Activated CD8-positive, alpha-beta T cell treated with anti-CD3 and anti-CD28 coated beads for 36 hours (primary cell): ENCODE measurements at regions of chr16 and their contacts with region 1.

Region 1: DNA sequence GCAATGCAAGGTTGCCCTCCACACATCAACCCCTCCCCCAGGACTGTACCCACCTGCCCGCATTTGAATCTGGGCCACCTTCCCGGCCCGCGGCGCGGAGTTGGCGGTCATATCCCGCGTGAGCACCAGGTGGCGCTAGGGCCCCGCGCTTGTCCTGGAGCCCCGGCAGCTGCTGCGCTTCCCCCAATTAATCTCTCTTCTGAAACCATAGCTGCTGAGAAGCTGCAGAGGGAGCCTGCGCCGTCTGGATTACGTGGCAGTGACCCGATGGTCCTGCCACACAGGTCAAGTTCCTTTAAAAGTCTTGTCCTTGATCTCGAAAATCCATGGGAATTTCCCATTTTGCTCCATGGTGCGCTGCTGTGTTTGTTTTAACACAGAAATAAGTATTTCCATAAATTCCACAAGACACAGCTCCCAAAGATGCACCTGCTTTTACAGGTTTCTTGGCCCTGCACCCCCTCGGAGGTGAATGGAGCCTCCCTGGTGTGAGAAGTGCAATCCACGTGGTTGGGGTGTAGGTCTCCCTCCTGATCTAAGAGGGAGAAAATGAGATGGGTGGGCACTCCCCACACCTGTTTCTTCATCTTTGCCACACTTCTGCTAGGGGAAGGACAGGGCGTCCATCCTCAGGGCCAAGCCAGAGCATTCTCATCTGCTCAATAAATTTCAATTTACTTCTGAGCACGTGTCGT is 22.1 kb downstream of the COX4I1 start:
- DNase-seq: peak; percentile 87
- ATAC-seq: peak; percentile 95
- H3K4me3 Mint-ChIP-seq: no peak overlapping the region
- H3K27ac Mint-ChIP-seq: no peak overlapping the region
- H3K4me1 Mint-ChIP-seq: peaks cover 5% of the 10 kb centered on the region
- H3K27me3 Mint-ChIP-seq: peaks cover 2% of the 10 kb centered on the region
- CTCF ChIP-seq: peak; percentile 96

Region 2: GRCh38 chr16:85717393-85718121 is 104.0 kb before region 1 on chr16:
- CTCF ChIA-PET with region 1: no interaction called
- POLR2A ChIA-PET with region 1: no interaction called
- intact Hi-C with region 1: no loop called
- DNase-seq: peak; percentile 78
- ATAC-seq: peak; percentile 68
- H3K4me3 Mint-ChIP-seq: no peak overlapping the region
- H3K27ac Mint-ChIP-seq: no peak overlapping the region
- H3K4me1 Mint-ChIP-seq: peaks cover 9% of the 10 kb centered on the region
- H3K27me3 Mint-ChIP-seq: no peaks in the 10 kb centered on the region
- CTCF ChIP-seq: peak; percentile 92

Region 3: DNA sequence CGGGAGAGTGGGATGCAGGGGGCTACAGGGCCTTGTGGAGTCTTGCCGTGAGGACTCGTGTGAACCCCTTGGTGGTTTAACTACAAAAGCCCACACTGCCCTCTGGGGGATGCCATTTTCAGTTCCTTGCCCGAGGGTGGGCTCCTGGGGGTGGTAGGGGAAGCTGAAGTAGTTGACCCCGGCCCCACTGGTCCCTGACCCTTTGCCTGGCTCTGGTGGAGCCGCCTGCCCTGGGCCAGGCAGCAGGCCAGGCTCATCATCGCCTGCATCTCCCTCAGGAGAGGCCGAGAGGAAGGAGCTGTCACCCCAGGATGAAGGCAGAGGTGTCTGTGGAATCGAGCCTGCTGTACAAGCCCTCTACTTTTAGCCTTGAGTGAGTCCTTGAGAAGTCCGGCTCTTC is 11.9 kb before region 1 on chr16:
- CTCF ChIA-PET with region 1: interaction called, 16 read pairs
- POLR2A ChIA-PET with region 1: interaction called, 4 read pairs
- intact Hi-C with region 1: no loop called
- DNase-seq: no peak
- ATAC-seq: no peak
- H3K4me3 Mint-ChIP-seq: no peak overlapping the region
- H3K27ac Mint-ChIP-seq: no peak overlapping the region
- H3K4me1 Mint-ChIP-seq: no peaks in the 10 kb centered on the region
- H3K27me3 Mint-ChIP-seq: peaks cover 11% of the 10 kb centered on the region
- CTCF ChIP-seq: no peak

Region 4: DNA sequence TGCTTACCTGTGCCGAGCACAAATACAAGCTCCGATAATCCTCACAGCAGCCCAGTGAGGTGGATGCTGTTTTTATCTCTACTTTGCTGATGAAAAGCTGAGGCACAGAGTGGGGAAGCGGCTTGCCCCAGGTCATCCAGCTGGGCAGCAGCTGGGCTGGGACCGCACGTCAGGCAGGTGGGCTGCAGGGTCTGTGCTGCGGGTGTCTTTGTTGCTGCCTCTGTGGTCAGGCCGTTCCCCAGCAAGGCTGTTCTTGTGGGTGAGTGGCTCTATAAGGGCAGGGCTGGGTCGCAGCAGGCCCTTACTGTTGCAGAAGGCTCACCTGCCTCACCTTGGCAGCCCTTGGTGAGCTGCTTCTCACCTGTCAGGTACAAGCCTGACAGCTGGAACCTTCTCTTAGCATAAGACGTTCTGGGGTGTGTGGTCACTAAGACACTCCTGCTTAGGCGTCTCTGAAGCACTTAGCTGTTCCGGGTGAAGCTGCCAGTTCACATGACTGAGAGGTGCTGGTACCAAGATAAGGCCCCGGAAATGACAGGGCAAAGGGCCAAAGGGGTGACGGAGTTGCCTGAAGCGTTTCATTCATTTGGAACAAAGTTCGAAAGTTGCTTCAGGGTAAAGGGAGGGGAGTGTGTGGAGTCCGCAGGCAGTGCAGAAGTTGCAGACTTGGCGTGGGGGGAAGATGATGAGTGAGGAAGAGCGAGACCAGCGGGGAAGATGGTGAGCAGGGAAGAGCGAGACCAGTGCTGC is 94.7 kb after region 1 on chr16:
- CTCF ChIA-PET with region 1: interaction called, 22 read pairs
- POLR2A ChIA-PET with region 1: interaction called, 4 read pairs
- intact Hi-C with region 1: no loop called
- DNase-seq: no peak
- ATAC-seq: no peak
- H3K4me3 Mint-ChIP-seq: no peak overlapping the region
- H3K27ac Mint-ChIP-seq: peak overlapping the region; percentile 44
- H3K4me1 Mint-ChIP-seq: peaks cover 31% of the 10 kb centered on the region
- H3K27me3 Mint-ChIP-seq: no peaks in the 10 kb centered on the region
- CTCF ChIP-seq: no peak

Region 5: GRCh38 chr16:85947230-85948137 is 125.9 kb after region 1 on chr16:
- CTCF ChIA-PET with region 1: interaction called, 13 read pairs
- POLR2A ChIA-PET with region 1: no interaction called
- intact Hi-C with region 1: no loop called
- DNase-seq: peak; percentile 78
- ATAC-seq: peak; percentile 78
- H3K4me3 Mint-ChIP-seq: peak overlapping the region; percentile 53
- H3K27ac Mint-ChIP-seq: peak overlapping the region; percentile 96
- H3K4me1 Mint-ChIP-seq: peaks cover 75% of the 10 kb centered on the region
- H3K27me3 Mint-ChIP-seq: no peaks in the 10 kb centered on the region
- CTCF ChIP-seq: no peak

Region 6: GRCh38 chr16:85995541-85996423 is 174.2 kb after region 1 on chr16:
- CTCF ChIA-PET with region 1: interaction called, 257 read pairs
- POLR2A ChIA-PET with region 1: no interaction called
- intact Hi-C with region 1: no loop called
- DNase-seq: peak; percentile 65
- ATAC-seq: peak; percentile 67
- H3K4me3 Mint-ChIP-seq: peak overlapping the region; percentile 6
- H3K27ac Mint-ChIP-seq: peak overlapping the region; percentile 67
- H3K4me1 Mint-ChIP-seq: peaks cover 60% of the 10 kb centered on the region
- H3K27me3 Mint-ChIP-seq: no peaks in the 10 kb centered on the region
- CTCF ChIP-seq: no peak

Region 7: DNA sequence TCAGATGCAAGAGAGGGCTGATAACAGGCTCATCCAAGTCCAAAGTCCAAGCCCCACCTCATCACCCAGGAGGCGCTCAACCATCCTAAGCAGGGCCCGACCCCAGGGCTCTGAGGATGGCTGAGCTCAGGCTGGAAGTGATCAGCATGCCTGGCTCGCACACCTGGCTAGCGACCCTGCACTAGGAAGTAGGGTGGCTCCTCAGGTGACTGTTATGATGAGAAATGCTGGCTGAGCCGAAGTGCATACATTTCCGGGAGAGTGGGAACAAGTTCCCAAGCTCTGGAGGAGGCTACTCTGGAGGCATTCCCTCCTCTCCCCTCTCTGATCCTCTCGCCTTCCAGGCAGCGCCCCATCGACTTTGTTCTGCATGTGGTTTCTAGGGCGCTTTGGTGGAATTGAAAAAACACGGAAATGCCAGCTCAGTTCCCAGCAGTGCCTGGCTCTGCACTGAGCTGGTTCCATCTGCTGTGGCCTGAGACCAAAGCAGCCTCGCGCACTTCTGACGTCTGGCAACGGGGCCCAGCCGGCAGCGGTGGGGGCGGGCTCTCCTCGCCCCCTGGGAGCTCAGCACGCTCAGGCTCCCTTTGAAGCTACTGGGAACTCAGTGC is 207.6 kb after region 1 on chr16:
- CTCF ChIA-PET with region 1: interaction called, 83 read pairs
- POLR2A ChIA-PET with region 1: no interaction called
- intact Hi-C with region 1: no loop called
- DNase-seq: no peak
- ATAC-seq: no peak
- H3K4me3 Mint-ChIP-seq: no peak overlapping the region
- H3K27ac Mint-ChIP-seq: no peak overlapping the region
- H3K4me1 Mint-ChIP-seq: no peaks in the 10 kb centered on the region
- H3K27me3 Mint-ChIP-seq: peaks cover 12% of the 10 kb centered on the region
- CTCF ChIP-seq: no peak